Cardiac septum (tissue), 1 donor: ENCODE measurements at regions of chr1 and their contacts with region 1.

Region 1: DNA sequence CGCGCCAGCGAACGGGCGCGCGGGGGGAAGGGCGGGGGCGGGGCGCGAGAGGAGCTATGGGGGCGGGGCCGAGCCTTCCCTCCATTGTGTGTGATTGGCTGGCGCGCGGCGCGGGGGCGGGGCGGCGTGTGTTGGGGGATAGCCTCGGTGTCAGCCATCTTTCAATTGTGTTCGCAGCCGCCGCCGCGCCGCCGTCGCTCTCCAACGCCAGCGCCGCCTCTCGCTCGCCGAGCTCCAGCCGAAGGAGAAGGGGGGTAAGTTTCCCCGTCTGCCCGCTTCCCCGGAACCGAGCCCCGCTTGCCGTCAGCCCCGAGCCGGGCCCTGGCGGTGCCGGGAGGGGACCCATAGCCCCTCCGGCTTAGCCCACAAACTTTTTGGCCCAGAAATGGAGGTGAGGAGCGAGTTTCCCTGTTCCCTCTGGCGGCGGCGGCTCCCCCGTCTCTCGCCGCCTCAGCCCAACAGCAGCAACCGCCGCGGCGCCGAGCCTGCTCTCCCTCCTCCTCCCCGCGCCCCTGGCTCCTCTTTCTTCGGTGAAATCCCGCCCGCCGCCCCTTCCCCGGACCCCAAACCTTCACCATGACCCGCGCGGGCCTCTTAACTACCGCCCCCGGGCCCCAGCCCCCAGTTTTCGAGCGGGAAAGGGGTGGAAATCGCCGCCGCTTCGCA is at the start of gene H3-3A:
- DNase-seq: peak; percentile 100
- total RNA-seq, gene H3-3A: 311 TPM

Region 2: GRCh38 chr1:225508538-225509375 is 553.9 kb before region 1 on chr1:
- intact Hi-C with region 1: loop called (anchors 2 kb)
- DNase-seq: no peak

Region 3: GRCh38 chr1:225999227-225999911 is 63.3 kb before region 1 on chr1 and contains the start of gene SDE2:
- intact Hi-C with region 1: loop called (anchors 1 kb)
- DNase-seq: peak; percentile 100
- total RNA-seq, gene SDE2: 14.6 TPM

Region 4: GRCh38 chr1:226034482-226034881 is 28.2 kb before region 1 on chr1:
- intact Hi-C with region 1: no loop called
- DNase-seq: peak; percentile 89

Region 5: GRCh38 chr1:226109829-226110248 is 47.1 kb after region 1 on chr1:
- intact Hi-C with region 1: loop called (anchors 1 kb)
- DNase-seq: peak; percentile 94

Region 6: DNA sequence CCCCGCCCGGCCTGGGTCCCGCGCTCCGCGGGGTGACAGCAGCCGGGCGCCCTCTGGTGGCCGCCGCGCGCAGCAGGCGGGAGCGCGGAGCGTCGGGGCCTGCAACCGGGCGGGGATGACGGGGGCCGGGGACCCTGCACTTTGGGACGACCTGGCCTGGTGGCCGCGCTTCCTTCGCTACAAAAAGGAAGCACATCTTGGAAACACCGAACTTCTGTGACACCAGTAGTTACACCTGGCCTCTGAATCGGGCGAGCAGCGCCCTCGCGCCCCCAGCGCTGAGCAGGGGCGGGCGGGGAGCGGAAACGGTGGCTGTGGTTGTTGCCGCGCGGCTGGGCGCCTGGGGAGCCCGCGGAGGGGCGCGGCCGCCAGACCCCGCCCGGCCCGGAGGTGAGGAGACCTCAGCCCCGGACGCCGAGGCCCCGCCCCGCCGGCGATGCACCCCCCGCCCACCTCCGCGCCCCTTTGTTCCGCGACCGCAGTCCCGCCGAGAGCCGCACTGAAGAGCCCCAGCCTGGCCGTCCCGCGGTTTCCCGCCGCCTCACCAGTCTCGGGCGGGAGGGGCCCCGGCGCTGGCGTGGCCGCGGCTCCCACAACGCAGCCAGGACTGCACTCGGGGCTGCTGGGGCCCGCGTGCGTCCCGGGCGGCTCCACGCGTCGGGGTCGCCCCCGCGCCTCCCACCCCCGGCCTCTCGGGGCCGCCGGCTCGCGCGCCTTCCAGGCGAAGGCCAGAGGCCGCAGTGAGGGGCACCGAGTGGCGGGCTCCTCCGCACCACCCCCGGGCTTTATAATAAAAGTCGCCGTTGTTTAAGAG is 59.1 kb after region 1 on chr1:
- intact Hi-C with region 1: loop called (anchors 1 kb)
- DNase-seq: peak; percentile 86

Region 7: DNA sequence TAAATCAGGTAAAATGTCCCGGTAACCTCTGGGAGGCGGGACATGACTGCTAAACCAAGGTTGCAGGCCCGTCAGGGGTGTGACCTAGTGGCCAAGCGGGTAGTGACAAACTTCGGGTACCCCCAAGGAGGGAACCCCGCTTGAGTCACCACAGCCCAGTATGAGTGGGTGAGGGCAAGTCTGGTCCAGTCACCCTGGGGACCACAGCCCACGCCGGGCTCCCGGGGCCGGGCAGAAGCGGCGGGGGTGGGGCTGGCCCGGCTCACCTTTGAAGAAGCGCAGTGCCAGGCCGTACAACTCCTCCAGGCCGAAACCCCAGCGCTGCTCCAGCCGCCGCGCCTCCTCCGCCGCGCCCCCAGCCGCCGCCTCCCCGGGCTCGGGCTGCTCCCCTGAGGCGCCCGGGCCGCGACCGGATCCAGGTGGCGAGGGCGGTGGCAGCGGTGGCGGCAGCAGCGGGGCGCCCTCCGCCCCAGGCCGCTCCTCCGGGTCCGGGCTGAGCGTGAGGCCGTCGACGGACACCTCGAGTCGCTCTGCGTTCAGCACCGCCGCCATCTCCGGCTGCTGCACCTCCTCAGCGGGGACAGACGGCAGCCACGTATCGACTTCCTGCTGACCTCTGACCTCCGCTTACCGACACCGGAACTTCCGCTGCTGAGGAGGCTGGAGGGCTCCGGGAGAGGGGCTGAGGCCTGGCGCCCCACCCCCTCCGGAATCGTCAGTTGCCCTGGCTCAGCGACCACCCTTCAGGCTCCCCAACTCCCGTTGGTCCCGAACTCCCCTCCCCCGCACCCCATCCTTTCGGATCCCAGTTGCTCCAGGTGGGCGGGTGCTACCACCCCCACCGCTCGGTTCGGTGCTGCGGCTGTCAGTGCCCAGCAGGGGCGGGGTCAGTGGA is 123.7 kb after region 1 on chr1 and contains the start of gene ACBD3:
- intact Hi-C with region 1: loop called (anchors 5 kb)
- DNase-seq: peak; percentile 95
- total RNA-seq, gene ACBD3: 42.3 TPM

Region 8: GRCh38 chr1:226355669-226356551 is 293.2 kb after region 1 on chr1:
- intact Hi-C with region 1: no loop called
- DNase-seq: no peak